ENCODE measurements at regions of chr11 and their contacts with region 1.

Region 1: DNA sequence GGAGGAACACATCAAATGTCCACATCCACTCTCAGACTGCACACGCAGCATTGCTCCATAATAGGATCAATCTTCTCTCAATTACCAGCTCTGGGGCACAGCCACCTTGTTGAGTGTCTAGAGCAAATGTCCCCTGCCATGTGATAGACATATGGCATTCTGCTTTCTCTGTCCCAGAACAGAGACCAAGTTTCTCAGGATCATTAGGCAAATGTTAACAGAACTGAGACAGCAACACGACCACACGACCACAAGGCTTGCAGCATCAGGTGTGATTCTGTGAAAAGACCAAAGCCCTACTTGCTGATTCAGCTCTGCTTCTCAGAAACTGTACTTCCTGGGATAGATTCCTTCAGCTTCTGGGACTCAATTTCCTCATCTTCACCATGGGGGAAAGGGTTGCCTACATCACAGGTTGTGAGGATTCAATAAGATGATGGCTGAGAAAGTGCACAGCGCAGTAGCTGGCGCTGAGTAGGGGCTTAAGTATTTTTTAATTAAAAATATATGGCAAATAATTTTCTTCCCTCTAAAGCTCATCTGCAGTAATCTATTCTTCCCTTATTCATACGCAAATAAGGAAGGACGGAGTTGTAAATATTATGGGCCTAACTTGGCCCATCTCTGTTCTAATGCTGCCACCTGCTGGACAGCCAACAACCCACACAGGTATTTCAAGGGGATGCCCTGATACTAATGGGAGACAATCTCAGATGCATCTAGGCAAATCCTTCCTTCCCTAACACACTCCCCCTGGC is 54.3 kb upstream of the USP47 start:
- DNase-seq: peak; percentile 54 to 95 (median 84)

Region 2: GRCh38 chr11:10770626-10771254 is 1016.7 kb before region 1 on chr11:
- intact Hi-C with region 1: loop called (anchors 10 kb)
- DNase-seq: peak in 6 of 10 donors; percentile 21 to 92 (median 59)

Region 3: DNA sequence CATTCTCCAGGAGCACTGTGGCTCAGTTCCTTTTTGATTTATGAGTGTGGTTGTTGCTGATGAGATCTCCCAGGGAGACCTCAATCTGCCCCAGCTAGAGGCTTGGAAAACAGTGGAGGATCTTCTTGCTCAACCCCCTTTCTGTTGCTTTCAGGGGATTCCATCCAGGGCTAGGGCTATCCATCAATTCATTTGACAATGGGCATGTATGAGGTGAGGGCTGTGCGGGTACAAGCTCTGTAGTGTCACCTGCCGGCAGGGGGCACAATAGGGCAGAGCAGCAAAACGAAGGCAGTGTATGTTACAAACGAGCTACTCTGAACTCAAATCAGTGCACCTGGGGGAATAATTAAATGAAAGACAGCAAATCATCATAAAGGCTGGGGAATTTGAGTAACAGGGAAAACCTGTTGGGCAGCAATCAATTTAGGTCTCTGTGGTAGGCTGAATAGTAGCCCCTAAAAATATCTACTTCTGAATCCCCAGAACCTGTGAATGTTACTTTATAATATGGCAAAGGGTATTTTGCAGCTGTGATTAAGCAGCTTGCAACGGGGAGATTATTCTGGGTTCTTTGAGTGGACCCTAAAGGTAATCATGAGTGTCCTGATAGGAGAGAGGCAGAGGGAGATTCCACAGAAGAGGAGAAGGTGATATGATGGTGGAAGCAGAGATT is 759.3 kb before region 1 on chr11:
- intact Hi-C with region 1: loop called (anchors 2 kb)
- DNase-seq: peak; percentile 25 to 94 (median 64)

Region 4: DNA sequence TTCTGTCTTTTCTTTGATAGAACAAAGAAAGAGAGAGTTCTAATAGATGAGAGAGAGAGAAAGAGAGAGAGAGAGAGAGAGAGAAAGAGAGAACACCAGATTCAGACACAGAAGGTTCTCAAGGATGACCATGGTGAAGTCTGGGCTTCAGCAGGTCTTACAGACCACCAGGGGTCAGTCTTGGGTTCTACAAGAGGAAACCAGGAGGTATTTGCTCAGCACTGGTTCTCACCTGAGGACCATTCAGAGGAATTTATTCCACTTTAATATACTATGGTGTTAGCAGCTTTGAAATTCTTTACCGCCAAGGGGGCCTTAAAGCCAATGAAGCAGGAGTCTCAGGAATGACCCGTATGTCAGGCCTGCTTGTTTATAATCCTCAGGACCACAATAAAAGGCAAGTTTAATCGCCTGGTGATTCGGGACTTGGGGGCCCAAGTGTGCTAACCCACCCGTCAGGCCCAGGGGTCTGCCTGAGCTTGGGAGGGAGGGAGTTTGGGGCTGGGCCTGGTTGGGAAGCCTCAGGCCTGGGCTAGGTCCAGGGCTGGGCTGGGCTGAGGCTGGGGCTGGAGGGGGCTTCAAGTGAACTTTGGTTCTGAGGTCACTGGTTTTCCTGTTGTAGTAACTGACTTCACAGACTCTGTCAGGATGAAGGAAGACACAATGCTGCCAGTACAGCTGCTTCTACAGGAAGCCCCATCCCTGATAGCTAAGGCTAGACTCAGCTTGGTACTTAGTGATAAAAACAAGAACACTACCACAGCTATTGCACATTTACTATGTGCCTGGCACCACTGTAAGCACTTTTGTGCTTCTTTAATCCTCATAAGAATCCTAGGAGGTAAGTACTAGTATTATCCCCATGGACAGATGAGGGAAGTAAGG is 750.4 kb before region 1 on chr11:
- intact Hi-C with region 1: loop called (anchors 2 kb)
- DNase-seq: peak in 2 of 10 donors; percentile 30 to 31

Region 5: GRCh38 chr11:11621573-11622319 is 165.7 kb before region 1 on chr11 and contains the start of gene GALNT18:
- intact Hi-C with region 1: loop called (anchors 5 kb)
- DNase-seq: peak; percentile 80 to 99 (median 92)

Measured in posterior cingulate gyrus (tissue), 11 donors.